GM10248 (cell line): ENCODE measurements at regions of chr17 and their contacts with region 1.

Region 1: GRCh38 chr17:4635823-4636375 is 5.6 kb downstream of the ALOX15 start:
- DNase-seq: peak; percentile 67
- CTCF ChIP-seq: no peak

Region 2: GRCh38 chr17:4625181-4625617 is 10.7 kb before region 1 on chr17:
- CTCF ChIA-PET with region 1: interaction called, 18 read pairs
- POLR2A ChIA-PET with region 1: no interaction called
- DNase-seq: no peak
- CTCF ChIP-seq: no peak